ENCODE measurements at regions of chr7 and their contacts with region 1.

Region 1: DNA sequence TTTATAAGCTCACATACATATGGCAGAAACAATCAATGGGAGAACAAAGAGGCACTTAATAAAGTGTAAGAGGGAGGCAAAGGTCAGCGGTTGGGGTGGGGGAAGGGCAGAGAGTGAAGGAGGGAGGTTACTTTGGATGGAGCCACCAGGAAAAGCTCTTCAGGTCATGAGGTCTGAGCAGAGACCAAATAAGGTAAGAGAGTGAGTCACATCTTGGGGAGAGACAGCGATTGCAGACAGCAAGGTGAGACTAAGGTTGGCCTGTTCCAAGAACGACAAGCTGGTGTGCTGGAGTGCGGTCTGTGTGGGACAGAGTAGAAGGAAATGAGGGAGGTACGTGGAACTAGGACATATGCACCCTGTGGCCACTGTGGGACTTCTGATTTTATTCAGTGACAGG is 74.3 kb upstream of the TOMM7 start:
- DNase-seq: peak; percentile 26
- H3K4me3 Mint-ChIP-seq: no peak overlapping the region
- H3K27ac Mint-ChIP-seq: no peak overlapping the region
- H3K4me1 Mint-ChIP-seq: peaks cover 7% of the 10 kb centered on the region
- H3K27me3 Mint-ChIP-seq: no peaks in the 10 kb centered on the region
- CTCF ChIP-seq: no peak

Region 2: GRCh38 chr7:22907805-22908204 is 10.9 kb after region 1 on chr7:
- CTCF ChIA-PET with region 1: no interaction called
- POLR2A ChIA-PET with region 1: interaction called, 10 read pairs
- intact Hi-C with region 1: no loop called
- DNase-seq: no peak
- H3K4me3 Mint-ChIP-seq: no peak overlapping the region
- H3K27ac Mint-ChIP-seq: no peak overlapping the region
- H3K4me1 Mint-ChIP-seq: no peaks in the 10 kb centered on the region
- H3K27me3 Mint-ChIP-seq: no peaks in the 10 kb centered on the region
- CTCF ChIP-seq: no peak

Measured in MCF 10A (cell line).